ENCODE measurements at regions of chr21 and their contacts with region 1.

Region 1: GRCh38 chr21:35189077-35189863 is 140.2 kb upstream of the RUNX1 start:
- DNase-seq: no peak
- ATAC-seq: peak; percentile 96
- H3K4me3 Mint-ChIP-seq: peak overlapping the region; percentile 55
- H3K27ac Mint-ChIP-seq: peak overlapping the region; percentile 78
- H3K4me1 Mint-ChIP-seq: peaks cover 36% of the 10 kb centered on the region
- H3K27me3 Mint-ChIP-seq: no peaks in the 10 kb centered on the region
- CTCF ChIP-seq: no peak

Region 2: DNA sequence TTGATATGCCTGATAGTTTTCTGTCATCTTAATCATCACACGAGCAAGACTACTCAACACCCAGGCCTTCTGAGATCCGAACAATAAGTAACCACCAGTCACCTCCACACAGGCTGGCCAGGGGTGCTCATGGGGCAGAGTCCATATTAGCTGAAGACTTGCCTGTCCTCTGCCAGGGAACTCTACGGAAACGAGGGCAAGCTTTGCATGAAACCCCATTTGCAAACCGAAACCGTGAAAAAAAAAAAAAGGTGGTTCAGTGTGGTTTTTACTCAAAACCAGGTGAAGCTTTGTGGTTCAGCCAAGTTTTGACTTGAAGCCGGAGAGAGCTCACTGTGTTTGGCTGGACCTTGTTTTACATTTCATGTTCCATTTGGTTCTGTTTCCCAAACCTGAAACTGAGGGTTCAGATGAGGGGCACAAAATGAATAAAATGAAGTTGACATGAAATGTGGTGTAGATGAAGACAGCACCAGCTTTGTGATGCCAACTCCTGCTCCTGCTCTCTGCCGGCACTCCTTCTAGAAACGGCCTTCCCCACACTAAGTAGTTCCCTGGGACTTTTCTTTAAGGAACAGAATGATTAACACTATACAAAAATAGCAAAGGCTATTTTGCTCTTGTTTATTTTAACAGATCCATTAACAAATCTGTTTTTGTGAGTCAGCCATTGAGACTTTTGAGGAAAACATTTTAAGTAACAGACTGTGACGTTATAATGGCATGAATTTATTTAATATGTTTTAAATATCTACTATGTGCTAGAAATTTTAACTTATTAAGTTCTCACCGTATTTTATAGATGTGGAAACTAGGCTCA is 214.9 kb before region 1 on chr21:
- CTCF ChIA-PET with region 1: no interaction called
- POLR2A ChIA-PET with region 1: interaction called, 4 read pairs
- intact Hi-C with region 1: loop called (anchors 1 kb)
- DNase-seq: no peak
- ATAC-seq: peak; percentile 90
- H3K4me3 Mint-ChIP-seq: peak overlapping the region; percentile 53
- H3K27ac Mint-ChIP-seq: peak overlapping the region; percentile 74
- H3K4me1 Mint-ChIP-seq: peaks cover 46% of the 10 kb centered on the region
- H3K27me3 Mint-ChIP-seq: no peaks in the 10 kb centered on the region
- CTCF ChIP-seq: no peak

Region 3: DNA sequence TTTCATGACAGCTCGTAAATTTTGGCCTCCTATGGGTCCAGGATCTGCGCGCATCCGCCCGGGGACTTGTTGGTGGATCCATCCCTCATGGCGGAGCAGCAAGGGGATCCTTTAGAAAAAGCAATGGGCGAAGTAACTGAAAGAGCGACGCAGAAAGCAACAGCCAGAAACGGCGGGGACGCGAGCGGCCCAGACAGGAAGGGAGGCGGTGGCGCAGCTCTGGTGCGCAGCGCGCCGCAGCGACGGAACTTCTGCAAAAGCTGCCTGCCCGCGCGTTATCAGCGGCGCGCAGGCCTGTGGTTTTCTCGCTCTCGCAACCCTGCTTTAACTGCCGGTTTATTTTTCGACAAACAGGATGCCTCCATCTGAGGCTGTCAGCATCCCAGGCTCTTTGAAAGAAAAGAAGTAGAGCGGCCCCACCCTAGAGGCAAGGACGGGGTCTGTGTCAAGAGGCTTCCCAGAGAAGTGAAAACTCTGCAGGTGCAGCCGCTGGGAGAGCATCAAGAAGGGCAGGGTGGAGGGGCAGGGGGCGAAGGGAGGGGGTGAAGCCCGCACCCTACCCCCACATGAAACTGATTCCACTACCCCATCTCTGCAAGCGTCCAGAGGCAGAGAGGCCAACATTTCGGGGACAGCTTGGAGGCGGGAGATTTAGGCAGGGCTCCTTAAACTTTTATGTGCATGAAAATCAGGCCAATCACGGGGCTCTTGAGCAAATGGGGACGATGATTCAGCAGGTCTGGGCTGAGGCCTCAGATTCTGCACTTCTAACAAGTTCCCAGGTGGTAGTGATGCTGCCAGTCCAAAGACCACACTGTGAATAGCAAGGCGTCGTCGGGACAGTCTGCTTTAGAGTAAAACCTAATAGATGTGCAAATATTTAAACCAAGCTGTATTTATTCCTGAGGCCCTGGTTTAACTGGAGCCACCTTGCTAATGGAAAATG is 162.4 kb before region 1 on chr21:
- CTCF ChIA-PET with region 1: no interaction called
- POLR2A ChIA-PET with region 1: interaction called, 10 read pairs
- intact Hi-C with region 1: no loop called
- DNase-seq: peak; percentile 73
- ATAC-seq: peak; percentile 90
- H3K4me3 Mint-ChIP-seq: peak overlapping the region; percentile 87
- H3K27ac Mint-ChIP-seq: peak overlapping the region; percentile 98
- H3K4me1 Mint-ChIP-seq: peaks cover 65% of the 10 kb centered on the region
- H3K27me3 Mint-ChIP-seq: no peaks in the 10 kb centered on the region
- CTCF ChIP-seq: no peak

Region 4: DNA sequence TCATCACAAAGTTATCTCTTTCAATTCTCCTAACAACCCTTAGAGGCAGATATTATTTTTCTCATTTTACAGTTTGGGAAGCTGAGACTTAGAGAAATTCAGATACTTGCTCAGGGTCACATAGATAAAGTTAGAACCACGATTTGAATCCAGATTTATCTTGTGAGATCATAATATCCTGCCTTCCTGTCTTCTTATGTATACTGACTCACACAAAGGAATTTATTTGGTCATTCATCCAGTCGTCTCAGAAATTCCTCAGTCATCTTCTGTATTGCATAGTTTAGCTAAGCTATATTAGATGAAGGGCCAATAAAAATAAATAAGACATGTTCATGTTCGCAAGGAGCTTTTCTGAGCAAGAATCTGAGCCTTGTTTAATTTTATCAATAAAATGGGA is 104.4 kb before region 1 on chr21:
- CTCF ChIA-PET with region 1: no interaction called
- POLR2A ChIA-PET with region 1: no interaction called
- intact Hi-C with region 1: no loop called
- DNase-seq: no peak
- ATAC-seq: no peak
- H3K4me3 Mint-ChIP-seq: no peak overlapping the region
- H3K27ac Mint-ChIP-seq: no peak overlapping the region
- H3K4me1 Mint-ChIP-seq: no peaks in the 10 kb centered on the region
- H3K27me3 Mint-ChIP-seq: peaks cover 3% of the 10 kb centered on the region
- CTCF ChIP-seq: no peak

Region 5: DNA sequence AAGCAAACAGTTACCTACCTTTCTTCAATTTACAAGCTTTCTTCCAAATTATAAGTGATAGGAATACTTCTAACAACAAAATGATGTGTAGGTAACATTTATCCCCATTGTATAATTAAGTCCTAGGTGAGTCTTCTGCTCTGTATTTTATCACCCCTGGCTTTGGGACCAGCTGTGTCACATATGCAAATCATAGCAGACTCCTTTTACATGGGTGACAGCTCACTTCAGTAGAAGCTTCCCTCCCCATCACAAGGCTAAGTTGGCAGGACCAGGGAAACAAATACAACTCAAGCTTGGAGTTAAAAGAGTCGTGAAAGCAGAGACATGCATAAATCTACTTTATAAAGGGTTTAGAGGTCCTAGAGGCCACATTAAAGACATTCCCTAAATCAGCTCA is 19.0 kb before region 1 on chr21:
- CTCF ChIA-PET with region 1: no interaction called
- POLR2A ChIA-PET with region 1: no interaction called
- intact Hi-C with region 1: loop called (anchors 2 kb)
- DNase-seq: no peak
- ATAC-seq: peak; percentile 86
- H3K4me3 Mint-ChIP-seq: no peak overlapping the region
- H3K27ac Mint-ChIP-seq: peak overlapping the region; percentile 5
- H3K4me1 Mint-ChIP-seq: peaks cover 24% of the 10 kb centered on the region
- H3K27me3 Mint-ChIP-seq: no peaks in the 10 kb centered on the region
- CTCF ChIP-seq: no peak

Region 6: DNA sequence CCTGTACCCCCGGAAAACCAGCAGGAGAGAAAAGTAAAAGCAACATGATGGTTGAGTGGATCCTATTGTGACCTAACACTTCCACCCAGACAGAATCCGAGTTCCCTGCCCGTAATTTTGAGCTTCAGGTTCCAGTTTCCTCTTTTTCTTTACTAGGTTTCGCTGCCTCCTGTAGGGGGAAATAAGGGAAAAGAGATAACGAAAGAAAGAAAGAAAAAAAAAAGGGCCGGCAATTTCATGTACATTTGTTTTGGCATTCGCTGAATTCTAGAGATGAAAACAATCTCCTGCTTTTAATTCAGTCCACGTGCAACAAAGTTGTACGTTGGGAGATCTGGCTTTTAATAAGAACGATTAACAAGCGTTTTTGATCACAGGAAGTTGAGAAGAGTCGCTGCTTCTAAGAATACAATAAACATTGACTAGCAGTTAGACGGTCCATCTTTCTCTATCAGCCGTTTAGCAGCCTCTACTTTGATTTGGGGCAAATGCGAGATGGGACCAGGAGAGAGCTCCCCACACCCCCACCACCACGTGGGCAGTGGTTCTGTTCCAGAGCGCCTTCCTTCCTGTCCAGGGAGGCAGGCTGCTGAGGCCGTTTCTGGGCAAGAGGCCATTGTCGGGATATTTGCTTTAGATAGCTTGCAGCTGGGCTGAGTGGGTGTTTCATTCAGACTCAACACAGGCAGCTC is 15.7 kb after region 1 on chr21:
- CTCF ChIA-PET with region 1: interaction called, 5 read pairs
- POLR2A ChIA-PET with region 1: interaction called, 9 read pairs
- intact Hi-C with region 1: loop called (anchors 1 kb)
- DNase-seq: no peak
- ATAC-seq: peak; percentile 51
- H3K4me3 Mint-ChIP-seq: peak overlapping the region; percentile 82
- H3K27ac Mint-ChIP-seq: peak overlapping the region; percentile 81
- H3K4me1 Mint-ChIP-seq: peaks cover 33% of the 10 kb centered on the region
- H3K27me3 Mint-ChIP-seq: no peaks in the 10 kb centered on the region
- CTCF ChIP-seq: no peak

Region 7: GRCh38 chr21:35226948-35227744 is 37.9 kb after region 1 on chr21:
- CTCF ChIA-PET with region 1: interaction called, 3 read pairs
- POLR2A ChIA-PET with region 1: interaction called, 19 read pairs
- intact Hi-C with region 1: loop called (anchors 1 kb)
- DNase-seq: no peak
- ATAC-seq: peak; percentile 86
- H3K4me3 Mint-ChIP-seq: peak overlapping the region; percentile 68
- H3K27ac Mint-ChIP-seq: peak overlapping the region; percentile 87
- H3K4me1 Mint-ChIP-seq: peaks cover 44% of the 10 kb centered on the region
- H3K27me3 Mint-ChIP-seq: peaks cover under 1% of the 10 kb centered on the region
- CTCF ChIP-seq: no peak

Region 8: GRCh38 chr21:35342440-35342839 is 153.2 kb after region 1 on chr21:
- CTCF ChIA-PET with region 1: no interaction called
- POLR2A ChIA-PET with region 1: interaction called, 5 read pairs
- intact Hi-C with region 1: loop called (anchors 1 kb)
- DNase-seq: no peak
- ATAC-seq: peak; percentile 78
- H3K4me3 Mint-ChIP-seq: peak overlapping the region; percentile 44
- H3K27ac Mint-ChIP-seq: peak overlapping the region; percentile 81
- H3K4me1 Mint-ChIP-seq: peaks cover 36% of the 10 kb centered on the region
- H3K27me3 Mint-ChIP-seq: no peaks in the 10 kb centered on the region
- CTCF ChIP-seq: no peak